ENCODE measurements at regions of chr10 and their contacts with region 1.

Region 1: DNA sequence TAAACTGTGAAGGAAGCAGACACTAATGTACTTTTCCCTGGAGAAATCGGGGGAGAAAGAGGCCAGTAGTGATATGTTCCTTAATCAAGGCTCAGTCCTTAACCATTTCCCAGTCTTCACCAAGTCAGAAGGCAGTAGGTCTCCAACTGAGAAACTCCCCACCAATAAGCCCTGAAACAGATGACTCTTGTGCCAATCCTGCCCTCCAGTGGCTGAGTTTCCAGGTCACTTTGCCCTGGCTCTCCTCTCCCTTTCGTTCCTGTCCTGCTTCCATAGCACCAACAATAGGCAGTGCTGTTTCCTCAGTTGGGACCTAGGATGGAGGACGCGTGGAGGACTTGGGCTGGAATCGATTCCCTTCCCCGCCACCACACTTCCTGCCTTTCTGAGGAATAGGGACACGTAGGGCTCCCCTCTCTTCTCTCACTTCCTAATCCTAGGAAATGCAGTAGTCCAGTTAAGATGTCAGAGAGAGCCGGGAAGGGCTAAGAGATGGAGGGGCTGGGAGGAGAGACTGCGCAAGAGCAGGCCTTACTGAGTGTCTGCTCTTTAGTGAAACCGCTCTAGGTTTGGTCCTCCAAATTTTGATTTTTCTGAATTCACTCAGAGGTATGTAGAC is 23.4 kb downstream of the ATOH7 start:
- DNase-seq: no peak
- H3K4me3 ChIP-seq: no peak overlapping the region
- CTCF ChIP-seq: peak; percentile 74

Region 2: GRCh38 chr10:68074775-68075549 is 133.6 kb before region 1 on chr10 and contains the start of gene HERC4:
- CTCF ChIA-PET with region 1: interaction called, 14 read pairs
- POLR2A ChIA-PET with region 1: no interaction called
- DNase-seq: no peak
- H3K4me3 ChIP-seq: peak within 1 kb of the TSS; percentile 97
- CTCF ChIP-seq: no peak

Region 3: DNA sequence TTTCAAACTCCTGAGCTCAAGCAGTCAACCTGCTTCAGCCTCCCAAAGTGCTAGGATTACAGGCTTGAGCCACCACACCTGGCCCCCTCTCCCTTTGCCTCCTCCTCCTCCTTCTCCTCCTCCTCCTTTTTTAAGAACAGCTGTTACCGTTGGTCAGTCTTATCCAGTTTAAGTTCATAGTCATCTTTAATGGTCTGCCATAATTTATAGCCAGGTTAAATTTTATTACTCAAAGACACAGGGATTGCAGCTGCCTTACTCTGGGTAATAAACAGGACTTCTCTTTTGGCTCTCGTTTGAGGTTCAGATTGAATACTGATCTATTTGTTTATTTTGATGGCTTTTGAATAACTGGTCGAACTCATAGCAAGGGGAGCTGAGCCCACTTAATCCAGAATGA is 11.8 kb before region 1 on chr10:
- CTCF ChIA-PET with region 1: interaction called, 15 read pairs
- POLR2A ChIA-PET with region 1: no interaction called
- DNase-seq: no peak
- H3K4me3 ChIP-seq: no peak overlapping the region
- CTCF ChIP-seq: no peak

Region 4: GRCh38 chr10:68231106-68231816 is 22.7 kb after region 1 on chr10:
- CTCF ChIA-PET with region 1: interaction called, 79 read pairs
- POLR2A ChIA-PET with region 1: no interaction called
- DNase-seq: no peak
- H3K4me3 ChIP-seq: peak overlapping the region; percentile 75
- CTCF ChIP-seq: no peak

Region 5: DNA sequence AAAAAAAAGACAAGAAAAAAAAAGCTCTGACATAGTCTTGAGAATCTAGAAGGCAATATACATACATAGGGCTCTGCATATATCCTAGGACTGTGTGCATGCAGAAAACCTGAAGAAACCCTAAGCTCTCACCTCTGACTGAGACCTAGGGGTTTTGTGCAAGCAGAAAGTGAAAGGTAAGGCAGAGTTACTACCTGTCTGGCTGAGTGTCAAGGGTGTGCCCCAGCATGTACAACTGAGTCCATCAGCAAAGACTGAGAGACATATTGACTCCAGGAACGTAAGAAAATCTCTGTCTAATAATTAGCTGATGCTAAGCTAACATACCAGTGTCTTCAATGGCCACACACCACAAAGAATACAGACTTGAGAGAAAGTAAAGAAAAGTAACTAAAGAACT is 107.0 kb after region 1 on chr10:
- CTCF ChIA-PET with region 1: interaction called, 12 read pairs
- POLR2A ChIA-PET with region 1: no interaction called
- DNase-seq: no peak
- H3K4me3 ChIP-seq: no peak overlapping the region
- CTCF ChIP-seq: no peak